CD8-positive, alpha-beta T cell (primary cell): ENCODE measurements at regions of chr17 and their contacts with region 1.

Region 1: GRCh38 chr17:1365445-1366039 is 34.5 kb downstream of the YWHAE start:
- DNase-seq: peak; percentile 10 to 88 (median 58)
- ATAC-seq: peak; percentile 76
- H3K4me3 ChIP-seq: no peak overlapping the region
- H3K4me3 Mint-ChIP-seq: no peak overlapping the region
- H3K27ac ChIP-seq: peak overlapping the region in 1 of 2 experiments; percentile 61
- H3K27ac Mint-ChIP-seq: no peak overlapping the region
- H3K4me1 ChIP-seq: peaks cover 34% of the 10 kb centered on the region
- H3K4me1 Mint-ChIP-seq: peaks cover 62% of the 10 kb centered on the region
- H3K27me3 ChIP-seq: no peaks in the 10 kb centered on the region
- H3K27me3 Mint-ChIP-seq: no peaks in the 10 kb centered on the region
- CTCF ChIP-seq: peak; percentile 90

Region 2: DNA sequence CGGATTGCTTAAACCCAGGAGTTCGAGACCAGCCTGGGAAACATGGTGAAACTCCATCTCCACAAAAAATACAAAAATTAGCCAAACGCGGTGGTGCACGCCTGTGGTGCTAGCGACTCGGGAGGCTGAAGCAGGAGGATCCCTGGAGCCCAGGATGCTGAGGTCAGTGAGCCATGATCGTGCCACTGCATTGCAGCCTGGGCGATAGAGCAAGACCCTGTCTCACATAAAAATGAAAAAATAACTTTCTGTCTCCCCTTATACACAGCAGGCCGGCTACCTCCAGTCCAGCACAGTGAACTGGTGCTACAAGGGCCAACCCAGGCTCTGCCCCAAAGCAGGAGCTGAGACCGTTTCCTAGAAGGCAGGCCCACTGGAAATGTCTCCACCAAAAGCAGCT is 25.2 kb before region 1 on chr17:
- CTCF ChIA-PET with region 1: interaction called, 16 read pairs
- POLR2A ChIA-PET with region 1: no interaction called
- intact Hi-C with region 1: no loop called
- DNase-seq: no peak
- ATAC-seq: no peak
- H3K4me3 ChIP-seq: no peak overlapping the region
- H3K4me3 Mint-ChIP-seq: no peak overlapping the region
- H3K27ac ChIP-seq: no peak overlapping the region
- H3K27ac Mint-ChIP-seq: no peak overlapping the region
- H3K4me1 ChIP-seq: no peaks in the 10 kb centered on the region
- H3K4me1 Mint-ChIP-seq: peaks cover 1% of the 10 kb centered on the region
- H3K27me3 ChIP-seq: no peaks in the 10 kb centered on the region
- H3K27me3 Mint-ChIP-seq: no peaks in the 10 kb centered on the region
- CTCF ChIP-seq: no peak

Region 3: DNA sequence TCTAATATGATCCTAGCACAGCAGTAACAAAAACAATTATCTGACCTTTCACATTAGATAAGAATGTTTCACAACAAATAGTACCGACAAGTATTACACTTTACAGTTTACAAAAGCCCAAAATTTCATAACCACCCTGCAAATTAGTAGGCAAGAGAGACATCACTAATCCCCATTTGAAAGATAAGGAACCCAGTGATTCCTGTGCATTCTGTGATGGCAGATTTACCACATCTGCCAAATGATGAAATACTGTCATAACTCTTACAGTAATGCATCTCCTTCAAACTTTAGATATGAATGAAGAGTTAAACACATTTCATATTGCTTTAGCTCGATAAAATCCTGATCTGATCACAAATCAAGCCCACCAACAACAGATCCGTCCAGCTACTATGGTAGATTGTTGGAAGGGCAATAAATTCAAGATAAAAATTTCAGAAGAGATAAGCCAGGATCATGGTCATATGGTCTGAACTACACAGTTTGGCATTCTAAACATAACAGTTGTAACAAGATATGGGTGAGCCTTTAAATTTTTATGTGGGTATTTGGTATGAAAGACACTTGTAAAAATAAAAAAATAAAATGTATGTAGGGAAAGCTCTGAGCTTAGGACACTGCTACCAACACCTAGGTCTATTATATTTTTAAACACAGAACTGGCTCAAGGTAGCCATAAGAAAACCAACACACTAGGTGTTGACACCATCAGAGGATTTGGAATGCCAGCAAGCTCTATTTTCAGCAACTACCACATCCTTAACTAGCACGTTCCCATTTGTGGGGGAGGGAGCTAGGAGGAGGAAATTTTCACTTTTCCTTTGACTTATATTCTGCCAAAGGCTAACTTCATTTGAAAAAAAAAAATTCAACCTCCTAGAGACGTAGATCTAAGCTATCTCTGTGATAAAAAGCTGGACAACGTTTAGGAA is 25.2 kb after region 1 on chr17:
- CTCF ChIA-PET with region 1: interaction called, 25 read pairs
- POLR2A ChIA-PET with region 1: interaction called, 3 read pairs
- intact Hi-C with region 1: no loop called
- DNase-seq: no peak
- ATAC-seq: no peak
- H3K4me3 ChIP-seq: no peak overlapping the region
- H3K4me3 Mint-ChIP-seq: peak overlapping the region; percentile 2
- H3K27ac ChIP-seq: no peak overlapping the region
- H3K27ac Mint-ChIP-seq: peak overlapping the region; percentile 39
- H3K4me1 ChIP-seq: peaks cover 75% of the 10 kb centered on the region
- H3K4me1 Mint-ChIP-seq: peaks cover 79% of the 10 kb centered on the region
- H3K27me3 ChIP-seq: no peaks in the 10 kb centered on the region
- H3K27me3 Mint-ChIP-seq: no peaks in the 10 kb centered on the region
- CTCF ChIP-seq: no peak

Region 4: DNA sequence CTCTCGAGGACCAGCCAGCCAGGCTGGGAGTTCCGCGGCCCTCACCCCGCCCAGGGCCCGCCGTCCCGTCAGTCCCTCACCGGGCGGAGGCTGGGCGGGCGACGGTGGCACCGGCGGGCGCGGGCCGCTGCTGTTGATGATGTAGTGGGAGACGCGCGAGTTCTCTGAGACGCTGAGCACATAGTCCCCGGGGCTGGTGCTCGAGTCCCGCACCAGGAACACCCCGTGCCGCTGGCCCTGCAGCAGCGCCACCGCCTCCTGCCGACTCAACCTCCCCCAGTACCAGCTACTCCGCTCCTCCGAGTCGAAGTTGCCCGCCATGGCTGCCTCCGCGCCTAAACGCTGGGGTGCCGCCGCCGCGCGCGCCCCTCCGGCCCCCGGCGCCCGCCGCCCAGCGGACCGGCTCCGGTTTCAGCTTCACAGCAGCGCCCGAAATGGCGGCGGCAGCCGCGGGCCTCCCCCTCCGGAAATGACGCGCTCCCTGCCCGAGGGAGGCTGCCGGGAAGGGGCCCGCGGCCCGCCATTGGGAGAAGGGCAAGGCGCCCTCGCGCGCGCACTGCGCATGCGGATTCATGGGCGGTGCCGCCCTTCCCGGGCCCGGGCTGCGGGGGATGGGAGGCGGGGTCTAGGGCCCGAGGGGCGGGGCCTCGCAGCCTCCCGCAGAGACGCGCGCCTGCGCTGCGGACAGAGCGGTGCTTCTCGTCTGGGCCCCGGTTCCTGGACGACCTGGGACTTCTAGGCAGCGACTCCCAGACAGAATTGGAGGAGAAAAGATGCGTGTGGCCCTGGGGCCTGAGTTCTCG is 90.5 kb after region 1 on chr17 and contains the start of gene CRK:
- CTCF ChIA-PET with region 1: interaction called, 6 read pairs
- POLR2A ChIA-PET with region 1: interaction called, 4 read pairs
- intact Hi-C with region 1: loop called in 1 of 2 experiments (anchors 1 kb)
- DNase-seq: peak; percentile 95 to 100 (median 99)
- ATAC-seq: peak; percentile 95
- H3K4me3 ChIP-seq: peak within 1 kb of the TSS; percentile 80 to 94
- H3K4me3 Mint-ChIP-seq: peak within 1 kb of the TSS; percentile 92
- H3K27ac ChIP-seq: peak within 1 kb of the TSS; percentile 92 to 93
- H3K27ac Mint-ChIP-seq: peak within 1 kb of the TSS; percentile 91
- H3K4me1 ChIP-seq: peaks cover 43% of the 10 kb centered on the region
- H3K4me1 Mint-ChIP-seq: peaks cover 46% of the 10 kb centered on the region
- H3K27me3 ChIP-seq: peaks cover 0 to 10% of the 10 kb centered on the region in 2 experiments
- H3K27me3 Mint-ChIP-seq: peaks cover 10% of the 10 kb centered on the region
- CTCF ChIP-seq: no peak
- total RNA-seq, gene CRK: 15.4 to 15.9 TPM

Region 5: DNA sequence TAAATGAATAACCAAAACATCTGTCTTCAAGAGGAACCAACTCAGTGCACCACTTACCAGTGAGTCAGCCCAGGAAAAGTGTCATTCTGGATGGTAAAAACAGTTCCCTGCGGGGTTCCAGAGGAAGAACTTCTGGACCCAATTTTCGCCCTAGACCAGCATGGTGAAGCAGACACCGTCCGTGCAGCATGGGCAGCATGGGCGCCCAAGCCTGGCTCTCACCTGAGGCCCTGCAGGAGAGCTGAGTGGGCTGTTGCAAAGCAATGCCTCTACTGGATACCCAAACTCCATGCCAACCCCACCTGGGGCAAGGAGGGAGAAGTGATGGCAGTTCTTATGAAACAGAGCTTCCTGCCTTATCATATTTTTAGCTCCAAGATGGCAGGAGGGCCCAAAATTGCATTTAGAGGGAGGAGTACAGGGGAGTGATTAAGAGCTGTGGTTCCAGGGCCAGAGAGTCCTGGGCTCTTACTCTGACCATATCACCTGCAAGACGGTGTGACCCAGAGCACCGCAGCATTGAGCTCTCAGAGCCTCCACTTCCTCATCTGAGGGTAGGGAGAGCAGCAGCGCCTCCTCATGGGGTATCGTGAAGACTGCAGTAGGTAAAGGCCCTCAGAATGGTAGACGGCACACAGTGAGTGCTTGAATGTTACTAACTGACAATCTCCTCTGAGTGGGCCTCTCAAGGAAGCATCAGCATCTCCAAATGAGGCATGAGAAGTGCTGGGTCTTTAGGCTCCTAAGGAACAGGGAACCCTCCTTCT is 167.5 kb after region 1 on chr17:
- CTCF ChIA-PET with region 1: interaction called, 25 read pairs
- POLR2A ChIA-PET with region 1: interaction called, 3 read pairs
- intact Hi-C with region 1: loop called (anchors 1 to 2 kb)
- DNase-seq: peak in 8 of 9 experiments; percentile 9 to 66 (median 51)
- ATAC-seq: peak; percentile 93
- H3K4me3 ChIP-seq: no peak overlapping the region
- H3K4me3 Mint-ChIP-seq: no peak overlapping the region
- H3K27ac ChIP-seq: no peak overlapping the region
- H3K27ac Mint-ChIP-seq: peak overlapping the region; percentile 55
- H3K4me1 ChIP-seq: no peaks in the 10 kb centered on the region
- H3K4me1 Mint-ChIP-seq: no peaks in the 10 kb centered on the region
- H3K27me3 ChIP-seq: no peaks in the 10 kb centered on the region
- H3K27me3 Mint-ChIP-seq: no peaks in the 10 kb centered on the region
- CTCF ChIP-seq: peak; percentile 41

Region 6: GRCh38 chr17:1573916-1574696 is 208.6 kb after region 1 on chr17:
- CTCF ChIA-PET with region 1: no interaction called
- POLR2A ChIA-PET with region 1: no interaction called
- intact Hi-C with region 1: no loop called
- DNase-seq: peak in 8 of 9 experiments; percentile 35 to 67 (median 48)
- ATAC-seq: peak; percentile 55
- H3K4me3 ChIP-seq: no peak overlapping the region
- H3K4me3 Mint-ChIP-seq: no peak overlapping the region
- H3K27ac ChIP-seq: no peak overlapping the region
- H3K27ac Mint-ChIP-seq: no peak overlapping the region
- H3K4me1 ChIP-seq: no peaks in the 10 kb centered on the region
- H3K4me1 Mint-ChIP-seq: no peaks in the 10 kb centered on the region
- H3K27me3 ChIP-seq: no peaks in the 10 kb centered on the region
- H3K27me3 Mint-ChIP-seq: no peaks in the 10 kb centered on the region
- CTCF ChIP-seq: peak; percentile 43